ENCODE measurements at regions of chr19 and their contacts with region 1.

Region 1: GRCh38 chr19:57191141-57192076 is at the start of gene ZNF264:
- DNase-seq: peak; percentile 88 to 90 (median 88)
- H3K4me3 ChIP-seq: peak within 1 kb of the TSS; percentile 57 to 73
- H3K4me3 Mint-ChIP-seq: peak within 1 kb of the TSS; percentile 91 to 94 (median 93)
- H3K27ac ChIP-seq: peak within 1 kb of the TSS; percentile 77
- H3K27ac Mint-ChIP-seq: peak within 1 kb of the TSS; percentile 94 to 98 (median 96)
- H3K4me1 ChIP-seq: peaks cover 23% of the 10 kb centered on the region
- H3K4me1 Mint-ChIP-seq: peaks cover 19 to 54% (median 36%) of the 10 kb centered on the region in 4 donors
- H3K27me3 ChIP-seq: no peaks in the 10 kb centered on the region
- H3K27me3 Mint-ChIP-seq: peaks cover 6 to 7% of the 10 kb centered on the region in 2 donors
- total RNA-seq, gene ZNF264: 62.5 to 64.1 TPM

Region 2: GRCh38 chr19:57141699-57142098 is 49.7 kb before region 1 on chr19:
- CTCF ChIA-PET with region 1: no interaction called
- POLR2A ChIA-PET with region 1: no interaction called
- intact Hi-C with region 1: no loop called
- DNase-seq: no peak
- H3K4me3 ChIP-seq: no peak overlapping the region
- H3K4me3 Mint-ChIP-seq: no peak overlapping the region
- H3K27ac ChIP-seq: no peak overlapping the region
- H3K27ac Mint-ChIP-seq: no peak overlapping the region
- H3K4me1 ChIP-seq: no peaks in the 10 kb centered on the region
- H3K4me1 Mint-ChIP-seq: no peaks in the 10 kb centered on the region
- H3K27me3 ChIP-seq: no peaks in the 10 kb centered on the region
- H3K27me3 Mint-ChIP-seq: no peaks in the 10 kb centered on the region

Region 3: DNA sequence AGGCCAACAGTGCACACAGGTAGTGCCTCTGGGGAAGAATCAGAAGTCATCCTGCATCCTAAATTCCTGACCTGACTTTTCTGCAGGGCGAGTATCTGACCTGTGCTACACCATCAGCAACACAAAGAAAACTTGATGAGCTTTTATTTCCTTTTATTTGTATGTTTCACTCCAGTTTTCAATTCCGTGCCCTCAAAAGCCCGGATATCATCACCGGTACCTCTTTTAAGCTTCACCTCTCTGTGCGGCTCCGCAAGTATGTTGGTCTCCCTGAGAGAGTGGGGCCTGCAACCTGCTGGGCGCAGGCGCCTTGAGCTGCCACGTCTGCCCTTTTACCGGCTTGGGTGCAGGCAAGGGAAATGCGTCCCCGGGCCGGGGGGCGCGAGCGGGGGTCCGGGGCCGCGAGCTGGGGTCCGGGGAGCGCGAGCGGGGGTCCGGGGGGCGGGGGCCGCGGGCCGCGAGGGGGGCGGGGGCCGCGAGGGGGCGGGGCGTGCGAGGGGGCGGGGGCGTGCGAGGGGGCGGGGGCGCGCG is 19.8 kb before region 1 on chr19:
- CTCF ChIA-PET with region 1: no interaction called
- POLR2A ChIA-PET with region 1: interaction called, 10 read pairs
- intact Hi-C with region 1: no loop called
- DNase-seq: peak; percentile 43 to 68 (median 62)
- H3K4me3 ChIP-seq: peak overlapping the region in 1 of 2 donors; percentile 8
- H3K4me3 Mint-ChIP-seq: peak overlapping the region; percentile 73 to 89 (median 81)
- H3K27ac ChIP-seq: peak overlapping the region; percentile 31
- H3K27ac Mint-ChIP-seq: peak overlapping the region; percentile 39 to 93 (median 82)
- H3K4me1 ChIP-seq: peaks cover 6% of the 10 kb centered on the region
- H3K4me1 Mint-ChIP-seq: peaks cover 7 to 14% (median 8%) of the 10 kb centered on the region in 4 donors
- H3K27me3 ChIP-seq: no peaks in the 10 kb centered on the region
- H3K27me3 Mint-ChIP-seq: peaks cover 3 to 10% of the 10 kb centered on the region in 2 donors

Region 4: GRCh38 chr19:57279418-57280066 is 88.1 kb after region 1 on chr19:
- CTCF ChIA-PET with region 1: no interaction called
- POLR2A ChIA-PET with region 1: no interaction called
- intact Hi-C with region 1: loop called (anchors 5 kb)
- DNase-seq: peak in 4 of 5 donors; percentile 77 to 85 (median 84)
- H3K4me3 ChIP-seq: peak overlapping the region; percentile 68 to 74
- H3K4me3 Mint-ChIP-seq: peak overlapping the region in 1 of 8 donors; percentile 20
- H3K27ac ChIP-seq: peak overlapping the region; percentile 100
- H3K27ac Mint-ChIP-seq: peak overlapping the region in 1 of 7 donors; percentile 74
- H3K4me1 ChIP-seq: peaks cover 38% of the 10 kb centered on the region
- H3K4me1 Mint-ChIP-seq: peaks cover 0 to 33% (median 23%) of the 10 kb centered on the region in 4 donors
- H3K27me3 ChIP-seq: no peaks in the 10 kb centered on the region
- H3K27me3 Mint-ChIP-seq: no peaks in the 10 kb centered on the region

Region 5: GRCh38 chr19:57389730-57390598 is 198.6 kb after region 1 on chr19 and contains the start of gene ZNF548:
- CTCF ChIA-PET with region 1: no interaction called
- POLR2A ChIA-PET with region 1: interaction called, 6 read pairs
- intact Hi-C with region 1: loop called (anchors 1 kb)
- DNase-seq: peak; percentile 93 to 100 (median 95)
- H3K4me3 ChIP-seq: peak within 1 kb of the TSS; percentile 52 to 62
- H3K4me3 Mint-ChIP-seq: peak within 1 kb of the TSS; percentile 97 to 99 (median 98)
- H3K27ac ChIP-seq: peak within 1 kb of the TSS; percentile 95
- H3K27ac Mint-ChIP-seq: peak within 1 kb of the TSS; percentile 98 to 100 (median 99)
- H3K4me1 ChIP-seq: peaks cover 22% of the 10 kb centered on the region
- H3K4me1 Mint-ChIP-seq: peaks cover 22 to 41% (median 31%) of the 10 kb centered on the region in 4 donors
- H3K27me3 ChIP-seq: no peaks in the 10 kb centered on the region
- H3K27me3 Mint-ChIP-seq: peaks cover 0 to 3% of the 10 kb centered on the region in 2 donors
- total RNA-seq, gene ZNF548: 85.4 to 103 TPM